ENCODE measurements at regions of chr1 and their contacts with region 1.

Region 1: DNA sequence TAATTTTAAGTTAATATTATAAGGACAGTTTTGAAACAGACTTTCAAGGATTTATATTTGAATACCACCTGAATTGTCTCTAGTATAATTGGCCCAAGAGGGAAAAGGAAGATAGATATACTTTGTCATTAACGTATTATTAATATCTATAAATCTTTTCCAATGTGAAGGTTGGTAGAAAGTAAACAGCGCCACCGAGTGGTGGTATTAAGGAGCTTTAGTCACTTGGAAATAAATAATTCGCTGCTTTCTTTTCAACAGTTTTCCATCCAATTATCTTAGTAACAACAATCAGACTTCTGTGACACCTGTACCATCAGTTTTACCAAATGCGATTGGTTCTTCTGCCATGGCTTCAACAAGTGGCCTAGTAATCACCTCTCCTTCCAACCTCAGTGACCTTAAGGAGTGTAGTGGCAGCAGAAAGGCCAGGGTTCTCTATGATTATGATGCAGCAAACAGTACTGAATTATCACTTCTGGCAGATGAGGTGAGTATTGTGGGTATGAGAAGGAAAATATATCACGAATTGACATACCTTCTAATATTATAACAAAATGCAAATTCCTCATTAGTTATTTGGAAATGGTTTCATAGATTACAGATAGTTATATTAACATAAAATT is 37.7 kb downstream of the SH3GLB1 start:
- DNase-seq: peak; percentile 34
- ATAC-seq: no peak
- H3K4me3 ChIP-seq: no peak overlapping the region
- H3K27ac ChIP-seq: no peak overlapping the region
- H3K4me1 ChIP-seq: no peaks in the 10 kb centered on the region
- H3K27me3 ChIP-seq: no peaks in the 10 kb centered on the region
- CTCF ChIP-seq: peak; percentile 53 to 80 (median 75); a peak in 5 of 6 replicates
- POLR2A ChIP-seq: no peak
- RAD21 ChIP-seq: peak; percentile 69

Region 2: DNA sequence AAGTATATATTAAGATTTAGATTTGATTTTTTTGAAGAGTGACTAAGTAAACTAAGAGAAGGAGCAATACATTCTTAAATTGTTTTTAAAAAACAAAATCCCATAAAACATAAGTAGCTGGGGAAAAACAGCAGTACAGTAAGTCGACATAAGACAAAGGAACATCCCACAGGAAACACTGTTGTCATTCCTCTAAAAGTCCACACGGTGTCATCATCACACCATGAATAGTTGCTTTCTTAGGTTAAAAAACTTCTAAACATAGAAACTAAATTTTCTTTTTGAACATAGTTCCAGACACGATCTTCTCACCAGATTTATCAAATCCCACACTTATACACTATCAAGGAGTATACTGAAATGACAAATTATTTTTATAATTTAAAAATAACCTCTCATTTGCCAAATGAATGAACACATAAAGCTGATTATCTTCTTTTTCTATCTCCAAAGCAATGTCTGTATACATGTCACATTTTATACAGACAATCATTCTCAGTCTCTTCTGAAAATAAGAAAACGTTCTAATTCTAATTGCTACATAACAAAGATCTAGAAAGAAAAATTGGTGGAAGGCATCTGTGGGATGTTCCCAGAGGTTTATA is 361.7 kb before region 1 on chr1:
- CTCF ChIA-PET with region 1: interaction called, 11 read pairs
- POLR2A ChIA-PET with region 1: no interaction called
- RAD21 ChIA-PET with region 1: no interaction called
- intact Hi-C with region 1: loop called (anchors 1 kb)
- DNase-seq: peak; percentile 71
- ATAC-seq: peak; percentile 61
- H3K4me3 ChIP-seq: no peak overlapping the region
- H3K27ac ChIP-seq: no peak overlapping the region
- H3K4me1 ChIP-seq: no peaks in the 10 kb centered on the region
- H3K27me3 ChIP-seq: no peaks in the 10 kb centered on the region
- CTCF ChIP-seq: peak; percentile 62 to 70 (median 70)
- POLR2A ChIP-seq: no peak
- RAD21 ChIP-seq: peak; percentile 80

Region 3: DNA sequence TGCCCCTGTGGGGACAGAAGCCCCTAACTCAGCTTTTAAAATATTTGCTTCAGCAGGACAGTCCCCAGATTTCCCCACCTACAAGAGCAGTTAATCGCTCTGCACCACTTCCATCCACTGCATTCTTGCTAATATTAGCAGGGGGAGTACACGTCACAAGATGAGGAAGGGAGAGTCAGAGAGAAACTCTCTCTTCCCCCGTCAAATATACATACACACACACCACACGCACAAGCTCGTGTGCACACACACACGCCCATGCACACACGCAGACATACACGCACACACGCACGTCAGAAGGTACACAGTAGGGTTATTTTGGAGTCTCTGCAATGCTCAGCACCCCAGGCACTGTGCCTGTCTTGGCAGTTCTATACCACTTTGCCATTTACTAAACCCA is 271.2 kb before region 1 on chr1:
- CTCF ChIA-PET with region 1: no interaction called
- POLR2A ChIA-PET with region 1: no interaction called
- RAD21 ChIA-PET with region 1: no interaction called
- intact Hi-C with region 1: loop called (anchors 2 kb)
- DNase-seq: no peak
- ATAC-seq: no peak
- H3K4me3 ChIP-seq: no peak overlapping the region
- H3K27ac ChIP-seq: no peak overlapping the region
- H3K4me1 ChIP-seq: no peaks in the 10 kb centered on the region
- H3K27me3 ChIP-seq: no peaks in the 10 kb centered on the region
- CTCF ChIP-seq: no peak
- POLR2A ChIP-seq: no peak
- RAD21 ChIP-seq: no peak

Region 4: DNA sequence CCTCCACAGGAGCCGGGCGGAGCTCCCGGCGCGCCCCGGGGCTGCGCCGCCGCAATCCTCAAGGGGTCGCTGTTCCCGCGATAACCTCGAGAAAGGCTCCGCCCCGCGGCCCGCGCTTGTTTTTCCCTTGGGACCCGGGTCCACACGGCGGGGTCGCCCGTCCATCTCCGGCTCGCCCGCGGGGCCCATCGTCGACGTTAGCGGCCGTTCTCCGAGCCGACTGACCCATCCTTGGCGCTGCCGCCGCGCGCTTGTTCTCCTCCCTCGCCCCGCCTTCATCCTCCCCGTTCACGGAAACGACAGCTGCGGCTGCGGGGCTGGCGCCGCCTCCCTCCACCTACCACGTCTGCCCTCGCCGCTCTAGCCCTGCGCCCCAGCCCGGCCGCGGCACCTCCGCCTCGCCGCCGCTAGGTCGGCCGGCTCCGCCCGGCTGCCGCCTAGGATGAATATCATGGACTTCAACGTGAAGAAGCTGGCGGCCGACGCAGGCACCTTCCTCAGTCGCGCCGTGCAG is 37.5 kb before region 1 on chr1 and contains the start of gene SH3GLB1:
- CTCF ChIA-PET with region 1: interaction called, 10 read pairs
- POLR2A ChIA-PET with region 1: interaction called, 3 read pairs
- RAD21 ChIA-PET with region 1: no interaction called
- intact Hi-C with region 1: no loop called
- DNase-seq: peak; percentile 74
- ATAC-seq: peak; percentile 95
- H3K4me3 ChIP-seq: peak within 1 kb of the TSS; percentile 64 to 85
- H3K27ac ChIP-seq: peak within 1 kb of the TSS; percentile 94
- H3K4me1 ChIP-seq: peaks cover 0 to 14% of the 10 kb centered on the region in 2 experiments; a peak in 2 of 4 replicates
- H3K27me3 ChIP-seq: no peaks in the 10 kb centered on the region
- CTCF ChIP-seq: peak; percentile 61 to 86 (median 75)
- POLR2A ChIP-seq: peak; percentile 48
- RAD21 ChIP-seq: peak; percentile 53
- total RNA-seq, gene SH3GLB1: 42.4 TPM

Region 5: GRCh38 chr1:86714159-86714558 is 27.9 kb before region 1 on chr1:
- CTCF ChIA-PET with region 1: interaction called, 10 read pairs
- POLR2A ChIA-PET with region 1: no interaction called
- RAD21 ChIA-PET with region 1: no interaction called
- intact Hi-C with region 1: no loop called
- DNase-seq: no peak
- ATAC-seq: no peak
- H3K4me3 ChIP-seq: no peak overlapping the region
- H3K27ac ChIP-seq: no peak overlapping the region
- H3K4me1 ChIP-seq: no peaks in the 10 kb centered on the region
- H3K27me3 ChIP-seq: no peaks in the 10 kb centered on the region
- CTCF ChIP-seq: no peak
- POLR2A ChIP-seq: no peak
- RAD21 ChIP-seq: no peak

Region 6: DNA sequence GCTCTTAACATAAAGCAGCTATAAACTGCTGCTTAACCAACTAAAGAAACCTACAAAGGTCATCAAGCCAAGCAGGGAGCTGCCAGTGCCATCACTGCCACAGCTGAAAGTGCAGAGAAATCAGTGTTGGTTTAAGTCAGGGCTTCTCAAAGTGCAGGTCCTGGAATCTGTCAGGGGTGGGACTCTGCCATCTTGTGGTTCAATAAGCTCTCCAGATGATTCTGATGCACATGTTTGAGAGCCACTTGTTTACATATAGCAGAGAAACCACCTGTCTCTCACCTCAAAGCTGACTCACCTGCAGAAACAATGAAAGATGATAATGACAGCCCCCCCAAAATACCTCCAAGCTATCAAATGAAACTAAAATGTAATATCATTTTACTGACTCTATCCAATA is 11.6 kb after region 1 on chr1:
- CTCF ChIA-PET with region 1: interaction called, 12 read pairs
- POLR2A ChIA-PET with region 1: no interaction called
- RAD21 ChIA-PET with region 1: no interaction called
- intact Hi-C with region 1: no loop called
- DNase-seq: peak; percentile 21
- ATAC-seq: peak; percentile 72
- H3K4me3 ChIP-seq: no peak overlapping the region
- H3K27ac ChIP-seq: no peak overlapping the region
- H3K4me1 ChIP-seq: no peaks in the 10 kb centered on the region
- H3K27me3 ChIP-seq: no peaks in the 10 kb centered on the region
- CTCF ChIP-seq: peak in 2 of 3 experiments; percentile 20 to 30; a peak in 2 of 6 replicates
- POLR2A ChIP-seq: no peak
- RAD21 ChIP-seq: peak; percentile 44

Measured in HCT116 (cell line).